SK-N-SH (cell line): ENCODE measurements at regions of chr17 and their contacts with region 1.

Region 1: DNA sequence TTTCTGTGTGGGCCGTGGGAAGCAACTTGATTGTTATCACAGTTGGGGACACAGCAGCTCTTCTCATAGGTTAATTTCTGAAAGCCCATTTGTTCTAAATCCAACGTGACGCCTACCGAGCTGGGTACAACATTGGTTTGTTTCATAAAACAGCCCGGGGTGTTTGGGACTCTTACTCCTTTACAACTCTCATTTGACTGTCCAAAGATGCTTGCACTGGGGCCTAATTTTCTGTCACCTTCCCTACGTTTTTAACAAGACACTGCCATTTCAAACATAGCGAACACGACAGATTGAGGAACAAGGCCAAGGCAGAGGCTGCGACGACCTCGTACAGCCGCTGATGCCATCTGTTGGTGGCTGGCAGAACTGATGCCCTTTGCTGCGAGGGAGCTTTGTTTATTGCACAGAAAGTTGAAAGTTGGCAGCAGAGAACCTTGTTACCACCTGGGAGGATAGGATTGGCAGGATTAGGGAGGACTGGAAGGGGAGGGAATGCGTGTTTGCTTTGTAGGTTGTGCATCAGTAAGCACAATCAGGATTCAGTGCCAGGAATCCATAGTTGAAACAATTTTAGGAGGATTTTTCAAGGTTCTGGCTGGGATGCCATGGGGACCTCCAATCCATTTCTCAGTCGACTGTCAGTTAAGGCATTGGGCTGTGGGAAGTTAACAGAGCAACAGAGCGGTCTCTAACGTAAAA is 98.3 kb downstream of the PITPNC1 start:
- DNase-seq: peak; percentile 84
- H3K4me3 ChIP-seq: no peak overlapping the region
- H3K27ac ChIP-seq: peak overlapping the region; percentile 11 to 42; a peak in 2 of 4 replicates
- H3K4me1 ChIP-seq: peaks cover 4 to 14% of the 10 kb centered on the region in 2 experiments; a peak in 3 of 4 replicates
- H3K27me3 ChIP-seq: no peaks in the 10 kb centered on the region
- CTCF ChIP-seq: peak; percentile 99
- EP300 ChIP-seq: no peak
- RAD21 ChIP-seq: peak; percentile 100

Region 2: GRCh38 chr17:67411397-67411796 is 64.0 kb before region 1 on chr17:
- CTCF ChIA-PET with region 1: interaction called, 14 read pairs
- POLR2A ChIA-PET with region 1: no interaction called
- DNase-seq: no peak
- H3K4me3 ChIP-seq: no peak overlapping the region
- H3K27ac ChIP-seq: no peak overlapping the region
- H3K4me1 ChIP-seq: no peaks in the 10 kb centered on the region
- H3K27me3 ChIP-seq: no peaks in the 10 kb centered on the region
- CTCF ChIP-seq: no peak
- EP300 ChIP-seq: no peak
- RAD21 ChIP-seq: no peak

Region 3: DNA sequence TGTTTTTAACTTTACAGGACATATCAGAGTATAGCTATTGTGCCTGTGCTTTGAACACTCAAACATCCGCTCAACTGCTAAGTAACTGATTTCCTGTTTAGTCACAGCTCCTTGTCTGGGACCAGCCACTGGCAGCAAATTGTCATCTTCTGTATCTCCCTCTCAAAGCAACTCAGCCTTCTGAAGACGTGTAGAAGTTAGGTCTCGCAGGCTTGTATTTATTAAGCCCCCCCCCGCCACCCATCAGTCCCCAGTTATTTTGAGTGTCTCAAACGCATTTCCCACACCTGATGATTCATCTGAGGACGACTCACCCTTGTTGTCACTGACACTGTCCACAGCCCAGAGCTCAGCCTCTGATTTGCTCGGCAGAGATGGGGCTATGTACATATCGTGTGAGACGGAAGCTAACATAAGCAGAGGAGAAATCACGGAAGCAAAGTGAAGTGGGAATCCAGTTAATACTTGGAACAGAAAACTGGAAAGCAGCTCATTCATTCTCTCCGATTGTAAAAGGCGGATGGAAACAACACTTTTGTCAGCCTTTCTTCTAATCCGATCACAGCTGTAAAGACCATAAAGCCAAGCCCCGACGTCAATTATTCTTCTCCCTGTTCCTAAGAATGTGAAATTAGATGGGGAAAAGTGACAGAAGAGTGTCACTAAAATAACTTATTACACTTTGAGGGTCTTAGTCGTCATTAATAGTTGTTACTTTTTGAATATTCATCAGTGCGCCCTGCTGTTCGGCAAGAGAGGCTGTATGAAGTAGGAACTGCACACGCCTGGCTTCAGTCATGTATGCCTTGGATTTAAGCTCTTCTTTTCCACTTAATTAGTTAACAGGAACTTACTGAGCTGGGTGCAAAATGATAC is 34.1 kb before region 1 on chr17:
- CTCF ChIA-PET with region 1: interaction called, 35 read pairs
- POLR2A ChIA-PET with region 1: no interaction called
- DNase-seq: no peak
- H3K4me3 ChIP-seq: peak overlapping the region in 1 of 2 experiments; percentile 39; a peak in 2 of 4 replicates
- H3K27ac ChIP-seq: peak overlapping the region; percentile 60 to 86
- H3K4me1 ChIP-seq: peaks cover 36 to 55% of the 10 kb centered on the region in 2 experiments
- H3K27me3 ChIP-seq: no peaks in the 10 kb centered on the region
- CTCF ChIP-seq: no peak
- EP300 ChIP-seq: 0 out of 4 replicates have a peak, but pooled peaks of 1 of the 2 experiments have one; percentile 43
- RAD21 ChIP-seq: no peak

Region 4: DNA sequence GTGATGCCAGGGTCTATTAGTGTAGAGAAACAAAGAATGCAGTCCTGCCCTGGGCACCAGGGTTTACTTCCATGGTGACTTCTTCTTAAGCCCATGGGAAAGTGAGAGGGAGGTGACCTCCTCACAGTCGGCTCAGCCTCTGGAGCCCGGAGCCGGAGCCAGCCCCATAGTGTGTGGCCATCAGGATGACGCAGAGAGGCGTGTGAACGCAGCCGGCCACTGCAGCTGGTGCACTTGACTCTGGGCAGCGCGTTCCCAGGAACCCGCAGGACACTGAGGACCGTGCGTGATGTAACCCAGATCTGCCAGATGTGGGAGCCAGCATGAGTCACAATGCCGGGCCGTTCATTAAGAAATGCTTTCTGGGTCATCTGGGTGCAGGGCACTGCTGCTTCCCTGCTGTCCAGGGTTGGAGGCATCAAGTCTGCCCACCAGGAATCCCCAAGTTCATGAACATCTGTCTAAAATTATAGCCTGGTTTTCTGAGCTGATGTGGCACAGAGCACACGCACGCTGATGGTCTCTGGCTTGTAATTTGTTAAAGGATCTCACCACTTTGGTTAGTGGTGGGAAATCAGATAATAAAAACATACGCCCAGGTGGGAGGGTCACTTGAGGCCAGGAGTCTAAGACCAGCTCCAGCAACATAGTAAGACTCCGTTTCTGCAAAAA is 15.8 kb after region 1 on chr17:
- CTCF ChIA-PET with region 1: interaction called, 78 read pairs
- POLR2A ChIA-PET with region 1: no interaction called
- DNase-seq: peak; percentile 89
- H3K4me3 ChIP-seq: peak overlapping the region; percentile 35 to 44
- H3K27ac ChIP-seq: peak overlapping the region; percentile 84 to 92
- H3K4me1 ChIP-seq: peaks cover 12 to 35% of the 10 kb centered on the region in 2 experiments
- H3K27me3 ChIP-seq: no peaks in the 10 kb centered on the region
- CTCF ChIP-seq: no peak
- EP300 ChIP-seq: peak; percentile 80 to 97; a peak in 3 of 4 replicates
- RAD21 ChIP-seq: peak; percentile 33

Region 5: DNA sequence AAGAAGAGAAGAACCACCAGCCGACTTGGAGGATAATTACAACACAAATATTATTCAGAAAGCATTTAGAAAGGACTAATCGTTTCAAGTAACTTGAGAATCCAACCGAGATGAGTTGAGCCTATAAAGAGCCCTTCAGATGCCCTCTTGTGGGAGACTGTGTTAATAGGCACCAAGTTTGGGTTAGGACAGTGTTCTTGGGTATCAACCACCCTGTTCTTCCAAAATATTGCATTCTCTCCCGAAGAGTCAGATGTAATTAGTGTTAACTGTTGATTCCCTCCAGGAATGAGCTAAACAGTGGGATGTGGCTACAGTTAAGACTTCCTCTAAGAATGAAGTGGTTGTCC is 154.6 kb after region 1 on chr17:
- CTCF ChIA-PET with region 1: interaction called, 13 read pairs
- POLR2A ChIA-PET with region 1: no interaction called
- DNase-seq: peak; percentile 59
- H3K4me3 ChIP-seq: no peak overlapping the region
- H3K27ac ChIP-seq: peak overlapping the region in 1 of 2 experiments; percentile 40; a peak in 1 of 4 replicates
- H3K4me1 ChIP-seq: peaks cover 0 to 4% of the 10 kb centered on the region in 2 experiments; a peak in 1 of 4 replicates
- H3K27me3 ChIP-seq: no peaks in the 10 kb centered on the region
- CTCF ChIP-seq: peak; percentile 72
- EP300 ChIP-seq: no peak
- RAD21 ChIP-seq: peak; percentile 74